ENCODE measurements at regions of chr6 and their contacts with region 1.

Region 1: DNA sequence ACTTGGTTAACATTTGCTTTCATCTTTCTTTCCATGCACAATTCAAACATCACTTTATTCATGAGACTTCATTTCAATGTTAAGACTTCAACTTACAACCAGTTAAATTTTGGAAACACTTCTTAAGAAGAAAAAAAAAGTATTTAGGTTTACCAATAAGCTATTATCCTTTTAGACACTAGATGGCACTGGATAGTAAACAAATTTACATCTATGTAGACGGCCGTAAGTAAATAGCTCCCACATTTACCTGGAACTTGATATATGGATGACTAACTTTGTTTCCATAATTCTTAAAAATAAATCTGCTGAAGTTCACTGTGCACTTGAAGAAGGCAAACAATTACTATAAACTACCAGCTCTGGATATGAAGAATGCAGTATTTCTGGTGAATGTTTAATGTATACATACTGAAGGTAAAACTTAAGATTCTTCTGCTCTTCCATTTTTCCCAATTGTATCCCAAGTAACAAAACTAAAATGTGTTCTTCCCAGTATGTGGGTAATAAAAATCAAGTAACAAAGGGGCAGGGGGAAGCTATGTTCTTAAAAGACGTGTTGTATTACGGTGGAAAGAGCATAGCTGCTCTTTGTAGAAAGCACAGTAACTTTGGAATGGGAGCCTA is 130.6 kb upstream of the C6orf118 start:
- DNase-seq: peak; percentile 12
- CTCF ChIP-seq: peak; percentile 44

Region 2: DNA sequence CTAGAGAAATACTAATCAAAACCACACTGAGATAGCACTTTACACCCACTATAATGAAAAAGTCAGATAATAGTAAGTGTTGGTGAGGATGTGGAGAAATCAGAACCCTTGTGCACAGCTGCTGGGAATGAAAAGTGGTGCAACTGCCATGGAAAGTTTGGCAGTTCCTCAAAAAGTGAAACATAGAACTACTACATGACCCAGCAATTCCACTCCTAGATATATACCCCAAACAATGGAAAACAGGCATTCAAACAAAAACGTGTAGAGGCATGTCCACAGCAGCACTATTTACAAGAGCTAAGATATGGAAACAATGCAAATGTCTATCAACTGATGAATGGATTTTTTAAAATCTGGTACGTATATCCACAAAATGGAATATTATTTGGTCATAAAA is 13.1 kb before region 1 on chr6:
- CTCF ChIA-PET with region 1: interaction called, 10 read pairs
- POLR2A ChIA-PET with region 1: no interaction called
- DNase-seq: no peak
- CTCF ChIP-seq: no peak

Region 3: GRCh38 chr6:165456286-165456685 is 16.2 kb after region 1 on chr6:
- CTCF ChIA-PET with region 1: interaction called, 14 read pairs
- POLR2A ChIA-PET with region 1: no interaction called
- DNase-seq: no peak
- CTCF ChIP-seq: no peak

Region 4: GRCh38 chr6:165766457-165766856 is 326.4 kb after region 1 on chr6:
- CTCF ChIA-PET with region 1: no interaction called
- POLR2A ChIA-PET with region 1: no interaction called
- DNase-seq: no peak
- CTCF ChIP-seq: no peak

Region 5: DNA sequence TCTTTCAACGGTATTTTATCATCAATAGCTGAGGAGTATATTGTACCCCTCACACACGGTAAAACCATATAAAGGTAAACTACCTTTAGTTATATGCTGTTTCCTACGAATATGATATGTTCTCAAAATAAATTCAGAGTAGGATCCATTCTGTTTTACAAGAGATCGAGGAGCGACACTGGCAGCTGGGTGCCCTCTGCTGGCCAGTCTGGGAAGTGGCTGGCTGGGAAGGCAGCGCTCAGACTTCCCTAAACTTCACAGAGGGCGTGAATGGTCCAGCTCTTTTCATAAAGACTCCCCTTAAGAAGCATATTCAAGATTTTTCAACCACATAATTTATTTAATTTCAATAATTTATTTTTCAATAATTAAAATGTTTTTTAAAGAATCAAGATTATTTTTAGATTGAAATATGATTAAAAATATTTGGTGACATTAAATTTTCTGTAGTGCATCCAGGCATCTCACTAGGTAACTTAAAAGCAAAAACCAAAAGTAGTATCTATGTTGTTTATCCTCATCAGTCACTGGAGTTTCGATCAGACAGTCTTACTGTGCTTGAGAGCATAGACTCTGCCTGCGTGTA is 410.5 kb after region 1 on chr6:
- CTCF ChIA-PET with region 1: interaction called, 89 read pairs
- POLR2A ChIA-PET with region 1: no interaction called
- DNase-seq: peak; percentile 79
- CTCF ChIP-seq: peak; percentile 98

Region 6: GRCh38 chr6:166046226-166046625 is 606.2 kb after region 1 on chr6:
- CTCF ChIA-PET with region 1: no interaction called
- POLR2A ChIA-PET with region 1: no interaction called
- DNase-seq: no peak
- CTCF ChIP-seq: no peak

Region 7: GRCh38 chr6:166106076-166106686 is 666.1 kb after region 1 on chr6:
- CTCF ChIA-PET with region 1: interaction called, 11 read pairs
- POLR2A ChIA-PET with region 1: no interaction called
- DNase-seq: peak; percentile 53
- CTCF ChIP-seq: peak; percentile 86

Measured in GM10248 (cell line).